Activated CD4-positive, alpha-beta memory T cell treated with anti-CD3 and anti-CD28 coated beads for 36 hours (primary cell): ENCODE measurements at regions of chr5 and their contacts with region 1.

Region 1: DNA sequence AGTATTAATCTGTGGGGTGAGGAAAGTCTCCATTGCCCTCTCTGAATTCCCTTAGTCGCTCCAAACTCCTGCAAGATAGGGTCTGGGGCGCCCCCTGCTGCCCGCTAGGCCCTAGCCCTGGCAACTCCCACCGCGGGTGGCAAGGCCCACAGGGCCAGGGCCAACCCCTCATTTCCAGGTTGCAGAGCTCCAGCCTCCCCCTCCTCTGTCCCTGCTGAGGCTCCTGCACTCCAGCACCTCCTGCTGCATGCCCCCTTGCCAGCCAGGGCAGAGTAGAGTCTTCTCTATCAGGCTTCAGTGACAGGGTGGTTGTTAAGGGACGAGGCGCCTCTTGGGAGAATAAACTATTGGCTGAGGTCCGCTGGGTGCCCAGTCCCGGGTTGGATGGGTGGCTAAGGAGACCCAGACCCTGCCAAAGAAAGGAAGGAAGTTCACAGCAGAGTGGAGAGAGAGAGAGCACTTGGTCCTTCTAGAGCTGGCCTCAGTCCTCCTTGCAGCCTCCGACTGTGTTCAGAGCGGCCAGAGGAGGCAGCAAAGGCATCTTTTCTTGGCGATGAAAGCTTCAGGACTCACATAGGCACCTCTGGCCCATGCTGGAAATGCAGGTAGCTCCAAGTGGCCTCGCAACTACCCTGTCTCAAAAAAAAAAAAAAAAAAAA is 45.6 kb downstream of the SAR1B start:
- DNase-seq: peak; percentile 92
- H3K4me3 Mint-ChIP-seq: no peak overlapping the region
- H3K27ac Mint-ChIP-seq: peak overlapping the region; percentile 16
- H3K4me1 Mint-ChIP-seq: peaks cover 16% of the 10 kb centered on the region
- H3K27me3 Mint-ChIP-seq: no peaks in the 10 kb centered on the region

Region 2: DNA sequence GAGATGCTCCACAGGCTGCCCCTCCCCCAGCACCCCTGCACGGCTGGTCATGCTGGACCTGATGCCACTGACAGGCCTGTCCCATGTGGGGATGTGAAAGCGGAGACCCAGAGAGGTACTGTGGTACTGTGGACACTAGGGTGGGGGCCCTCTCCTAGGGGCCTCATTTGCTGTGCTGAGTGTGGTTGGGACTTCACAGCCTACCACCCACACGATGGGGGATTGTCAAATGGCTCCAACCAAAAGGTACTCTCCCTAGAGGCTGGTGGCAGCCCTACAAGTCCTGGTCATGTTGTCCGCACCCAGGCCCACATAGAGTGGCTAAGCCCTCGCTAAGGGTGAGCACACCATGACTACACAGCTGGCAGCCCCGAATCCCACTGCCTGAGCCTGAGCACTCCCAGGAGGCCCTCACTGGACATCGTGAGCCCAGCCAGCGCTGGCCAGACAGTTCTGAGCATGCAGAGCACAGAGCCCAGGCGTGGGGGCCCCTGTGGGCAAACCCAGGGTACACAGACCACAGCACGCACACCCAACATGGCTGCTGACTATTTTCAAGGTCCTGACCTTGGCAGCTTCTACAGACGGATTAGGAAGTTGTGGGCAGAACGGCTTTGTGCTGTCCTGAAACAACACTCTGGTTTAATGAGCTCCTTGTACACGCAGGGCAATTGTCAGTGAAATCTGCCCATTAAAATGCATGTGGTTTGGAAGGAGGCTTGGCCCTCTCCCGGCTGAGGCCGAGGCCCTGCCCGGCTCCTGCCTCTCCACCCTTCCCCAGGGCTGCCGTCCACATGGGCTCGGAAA is 1321.1 kb before region 1 on chr5:
- CTCF ChIA-PET with region 1: no interaction called
- POLR2A ChIA-PET with region 1: no interaction called
- intact Hi-C with region 1: no loop called
- DNase-seq: no peak
- H3K4me3 Mint-ChIP-seq: no peak overlapping the region
- H3K27ac Mint-ChIP-seq: no peak overlapping the region
- H3K4me1 Mint-ChIP-seq: no peaks in the 10 kb centered on the region
- H3K27me3 Mint-ChIP-seq: peaks cover 6% of the 10 kb centered on the region

Region 3: DNA sequence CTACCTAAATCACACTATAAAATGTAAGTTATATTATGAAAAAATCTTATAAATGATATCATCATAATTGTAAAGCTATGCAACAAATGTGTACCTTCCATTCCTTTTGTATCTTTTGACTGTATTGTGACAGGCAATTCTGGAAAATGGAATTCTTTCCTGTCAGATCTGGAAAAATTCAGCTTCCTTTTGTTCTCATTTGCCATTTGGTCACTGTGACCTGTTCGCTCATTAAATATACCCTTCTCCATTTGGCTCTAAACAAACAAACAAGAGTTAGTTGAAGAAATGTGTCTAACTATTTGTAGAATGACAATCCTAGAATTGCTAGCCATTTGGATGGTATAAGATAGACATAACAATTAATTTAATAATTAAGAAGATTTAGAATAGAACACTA is 282.7 kb before region 1 on chr5:
- CTCF ChIA-PET with region 1: interaction called, 59 read pairs
- POLR2A ChIA-PET with region 1: no interaction called
- intact Hi-C with region 1: loop called (anchors 1 kb)
- DNase-seq: no peak
- H3K4me3 Mint-ChIP-seq: no peak overlapping the region
- H3K27ac Mint-ChIP-seq: no peak overlapping the region
- H3K4me1 Mint-ChIP-seq: peaks cover 2% of the 10 kb centered on the region
- H3K27me3 Mint-ChIP-seq: no peaks in the 10 kb centered on the region

Region 4: GRCh38 chr5:134411546-134412266 is 175.3 kb before region 1 on chr5 and contains the start of gene CDKN2AIPNL:
- CTCF ChIA-PET with region 1: interaction called, 42 read pairs
- POLR2A ChIA-PET with region 1: no interaction called
- intact Hi-C with region 1: loop called (anchors 2 kb)
- DNase-seq: peak; percentile 94
- H3K4me3 Mint-ChIP-seq: peak within 1 kb of the TSS; percentile 87
- H3K27ac Mint-ChIP-seq: peak within 1 kb of the TSS; percentile 73
- H3K4me1 Mint-ChIP-seq: peaks cover 31% of the 10 kb centered on the region
- H3K27me3 Mint-ChIP-seq: no peaks in the 10 kb centered on the region
- total RNA-seq, gene CDKN2AIPNL: 32.0 to 33.3 TPM

Region 5: DNA sequence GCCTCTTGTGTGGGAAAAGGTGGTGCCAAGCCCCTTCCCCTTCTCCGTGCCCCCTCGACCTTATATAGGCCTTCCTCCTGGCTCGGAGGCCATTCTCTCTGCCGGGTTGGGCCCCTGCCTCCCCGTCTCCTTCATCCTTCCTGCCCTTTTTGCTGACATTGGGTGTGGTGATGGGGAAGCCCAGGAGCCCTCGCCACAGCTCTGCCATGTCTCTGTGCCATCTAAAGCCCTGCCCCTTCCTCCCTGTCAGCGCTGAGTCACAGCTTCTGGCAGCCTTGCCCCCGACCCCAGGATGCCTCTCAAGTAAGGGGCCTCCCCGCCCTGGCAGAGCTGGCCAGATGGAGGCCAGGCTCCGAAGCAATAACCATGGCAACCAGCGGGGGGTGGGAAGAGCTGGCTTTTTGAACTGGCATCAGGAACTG is 31.1 kb before region 1 on chr5:
- CTCF ChIA-PET with region 1: interaction called, 6 read pairs
- POLR2A ChIA-PET with region 1: no interaction called
- intact Hi-C with region 1: loop called (anchors 1 kb)
- DNase-seq: peak; percentile 97
- H3K4me3 Mint-ChIP-seq: peak overlapping the region; percentile 70
- H3K27ac Mint-ChIP-seq: peak overlapping the region; percentile 99
- H3K4me1 Mint-ChIP-seq: peaks cover 47% of the 10 kb centered on the region
- H3K27me3 Mint-ChIP-seq: no peaks in the 10 kb centered on the region

Region 6: GRCh38 chr5:134626369-134627014 is 39.5 kb after region 1 on chr5:
- CTCF ChIA-PET with region 1: interaction called, 14 read pairs
- POLR2A ChIA-PET with region 1: no interaction called
- intact Hi-C with region 1: no loop called
- DNase-seq: no peak
- H3K4me3 Mint-ChIP-seq: no peak overlapping the region
- H3K27ac Mint-ChIP-seq: no peak overlapping the region
- H3K4me1 Mint-ChIP-seq: peaks cover 31% of the 10 kb centered on the region
- H3K27me3 Mint-ChIP-seq: no peaks in the 10 kb centered on the region

Region 7: DNA sequence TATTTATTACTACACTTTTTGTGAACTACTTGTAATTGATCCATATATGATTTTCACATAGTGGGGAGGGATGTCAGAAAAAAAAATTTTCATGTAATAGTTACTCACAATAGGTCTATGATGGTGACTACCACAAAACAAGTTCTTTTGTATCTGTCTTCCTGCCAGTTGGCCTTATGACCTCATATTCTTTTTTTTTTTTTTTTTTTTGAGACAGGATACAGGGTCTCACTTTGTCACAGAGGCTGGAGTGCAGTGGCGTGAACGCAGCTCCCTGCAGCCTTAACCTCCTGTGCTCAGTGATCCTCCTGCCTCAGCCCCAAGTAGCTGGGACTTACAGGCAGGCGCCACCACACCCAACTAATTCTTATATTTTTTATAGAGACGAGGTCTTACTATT is 72.5 kb after region 1 on chr5:
- CTCF ChIA-PET with region 1: interaction called, 11 read pairs
- POLR2A ChIA-PET with region 1: no interaction called
- intact Hi-C with region 1: no loop called
- DNase-seq: no peak
- H3K4me3 Mint-ChIP-seq: no peak overlapping the region
- H3K27ac Mint-ChIP-seq: no peak overlapping the region
- H3K4me1 Mint-ChIP-seq: peaks cover 19% of the 10 kb centered on the region
- H3K27me3 Mint-ChIP-seq: no peaks in the 10 kb centered on the region